OCI-LY7 (cell line): ENCODE measurements at regions of chr2 and their contacts with region 1.

Region 1: DNA sequence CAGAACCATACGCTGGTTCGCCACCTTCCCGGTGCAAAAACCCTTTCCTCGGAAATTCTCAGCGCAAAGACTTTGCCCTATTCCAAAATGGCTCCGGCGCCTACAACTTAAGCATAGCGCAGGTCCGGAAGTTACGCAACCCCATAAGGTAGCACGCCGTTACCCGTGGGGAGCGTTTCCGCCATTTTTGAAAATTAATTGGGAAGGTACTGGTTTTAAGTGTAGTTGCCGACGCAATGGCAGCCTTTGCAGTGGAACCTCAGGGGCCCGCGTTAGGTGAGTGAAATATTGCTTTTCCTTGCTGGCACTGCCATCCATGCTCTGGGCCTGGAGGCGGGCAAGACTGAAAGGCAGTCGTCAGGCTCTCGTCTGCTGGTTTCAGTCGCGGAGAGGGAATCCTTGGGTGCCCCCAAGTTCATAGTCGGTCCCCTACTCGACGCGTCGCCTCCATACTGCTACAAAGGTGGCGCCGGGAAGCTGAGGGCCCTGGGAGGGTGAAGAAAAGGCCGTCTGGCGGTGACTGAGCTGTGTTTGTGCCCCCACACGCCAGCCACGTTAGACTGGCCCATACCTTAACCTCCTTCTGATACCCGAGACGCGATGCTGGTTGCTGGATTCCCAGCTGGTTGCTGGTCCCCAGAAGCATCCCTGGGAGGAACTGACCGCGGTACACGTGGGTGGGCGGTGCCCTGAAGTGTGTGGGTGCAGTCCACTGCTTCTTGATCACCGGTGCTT is at the start of gene NUP35:
- DNase-seq: peak; percentile 95
- H3K4me3 ChIP-seq: peak within 1 kb of the TSS; percentile 97
- H3K27ac ChIP-seq: peak within 1 kb of the TSS; percentile 88
- H3K4me1 ChIP-seq: peaks cover 22% of the 10 kb centered on the region
- CTCF ChIP-seq: no peak
- total RNA-seq, gene NUP35: 36.5 and 40.2 TPM in 2 replicates

Region 2: GRCh38 chr2:183078465-183079138 is 45.8 kb before region 1 on chr2 and contains the start of gene DUSP19:
- CTCF ChIA-PET with region 1: interaction called, 4 read pairs
- POLR2A ChIA-PET with region 1: interaction called, 10 read pairs
- intact Hi-C with region 1: no loop called
- DNase-seq: peak; percentile 89
- H3K4me3 ChIP-seq: peak within 1 kb of the TSS; percentile 77
- H3K27ac ChIP-seq: peak within 1 kb of the TSS; percentile 13
- H3K4me1 ChIP-seq: peaks cover 15% of the 10 kb centered on the region
- CTCF ChIP-seq: no peak
- total RNA-seq, gene DUSP19: 1.0 and 1.2 TPM in 2 replicates

Region 3: GRCh38 chr2:183105402-183106134 is 18.8 kb before region 1 on chr2:
- CTCF ChIA-PET with region 1: no interaction called
- POLR2A ChIA-PET with region 1: interaction called, 12 read pairs
- intact Hi-C with region 1: no loop called
- DNase-seq: no peak
- H3K4me3 ChIP-seq: no peak overlapping the region
- H3K27ac ChIP-seq: no peak overlapping the region
- H3K4me1 ChIP-seq: no peaks in the 10 kb centered on the region
- CTCF ChIP-seq: no peak